ENCODE measurements at regions of chr3 and their contacts with region 1.

Region 1: DNA sequence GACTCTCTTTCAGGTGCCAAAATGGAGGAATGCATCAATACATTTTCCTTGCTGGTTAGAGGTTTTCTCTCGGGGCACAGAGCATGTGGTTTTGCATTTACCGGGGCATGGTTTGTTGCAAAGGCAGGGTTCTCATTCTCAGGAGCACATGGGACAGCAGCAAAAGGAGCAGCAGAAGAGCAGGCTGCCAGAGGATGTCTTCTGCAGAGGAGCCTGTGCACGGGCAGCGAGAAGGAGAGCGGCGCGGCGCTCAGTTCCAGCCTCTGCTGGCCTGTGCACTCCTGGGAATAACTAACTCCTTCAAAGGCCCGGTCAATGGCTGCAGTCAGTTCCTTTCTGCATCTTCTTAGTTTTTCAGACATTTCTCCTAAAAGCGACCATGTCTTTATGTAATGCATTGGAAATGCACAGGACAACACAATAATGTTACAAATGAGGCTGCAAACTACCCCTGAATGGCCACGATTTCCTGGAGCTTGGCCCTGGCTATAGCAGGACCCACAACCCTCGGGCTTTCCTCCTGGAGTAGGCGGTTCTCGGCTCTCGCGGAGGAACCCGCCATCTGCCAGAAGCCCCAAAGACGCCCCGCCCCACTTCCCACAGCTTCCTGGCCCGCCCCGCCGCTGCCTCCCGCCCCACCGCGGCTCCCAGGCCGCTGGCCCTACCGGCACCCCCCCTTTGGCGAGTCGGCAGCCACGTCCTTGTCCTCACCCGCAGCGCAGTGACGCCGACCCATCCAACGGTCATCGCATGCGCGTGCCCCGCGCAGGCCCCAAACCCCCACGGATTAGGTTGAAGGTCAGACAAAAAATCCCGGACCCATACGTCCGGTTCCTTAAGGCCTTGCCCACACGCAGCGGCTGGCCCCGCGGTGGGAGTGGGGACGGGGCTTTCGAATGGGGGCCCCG is at the start of gene C3orf62:
- DNase-seq: peak; percentile 96
- ATAC-seq: peak; percentile 96
- total RNA-seq, gene C3orf62: 3.0 TPM

Region 2: GRCh38 chr3:49171119-49171774 is 105.5 kb before region 1 on chr3 and contains the start of gene KLHDC8B:
- intact Hi-C with region 1: loop called (anchors 10 kb)
- DNase-seq: peak; percentile 95
- ATAC-seq: peak; percentile 88
- total RNA-seq, gene KLHDC8B: 95.1 TPM

Region 3: GRCh38 chr3:49217688-49218470 is 58.9 kb before region 1 on chr3:
- intact Hi-C with region 1: no loop called
- DNase-seq: peak; percentile 70
- ATAC-seq: peak; percentile 86

Region 4: DNA sequence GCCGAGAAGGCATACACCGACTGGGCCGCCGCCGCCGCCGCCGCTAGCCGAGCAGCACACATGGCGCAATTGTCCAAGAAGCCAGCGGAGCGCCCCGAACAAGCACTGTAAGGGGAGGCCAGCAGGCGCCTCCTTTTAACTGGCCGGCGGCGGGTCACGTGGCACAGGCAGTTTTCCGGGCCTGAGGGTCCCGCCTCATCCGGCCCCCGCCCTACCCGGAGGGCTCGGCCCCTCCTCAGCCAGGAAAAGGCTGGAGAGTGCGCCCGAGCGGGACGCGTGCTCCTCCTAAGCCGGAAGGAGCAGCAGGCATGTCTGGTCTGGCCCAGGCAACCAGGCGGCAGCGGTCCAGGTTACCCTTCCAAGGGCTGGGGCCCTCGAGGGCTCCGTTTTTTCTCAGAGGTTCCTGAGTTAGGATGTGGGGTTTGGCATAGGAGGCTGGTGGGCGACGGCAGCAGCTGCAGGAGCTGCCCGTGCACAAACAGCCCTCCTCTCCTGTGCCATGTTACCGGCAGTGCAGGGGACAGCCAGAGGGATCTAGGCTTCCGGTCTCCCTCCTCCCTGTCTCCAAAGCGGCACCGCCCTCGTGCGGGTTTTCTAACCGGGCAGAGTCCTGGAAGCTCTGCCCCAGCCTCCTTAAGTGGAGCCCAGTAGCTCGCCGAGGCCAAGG is 81.6 kb after region 1 on chr3 and contains the start of gene GPX1:
- intact Hi-C with region 1: no loop called
- DNase-seq: peak; percentile 97
- ATAC-seq: peak; percentile 95
- total RNA-seq, gene GPX1: 113 TPM

Region 5: GRCh38 chr3:49411968-49412631 is 135.4 kb after region 1 on chr3 and contains the starts of genes RHOA and TCTA:
- intact Hi-C with region 1: no loop called
- DNase-seq: peak; percentile 100
- ATAC-seq: peak; percentile 95
- total RNA-seq, gene RHOA: 266 TPM
- total RNA-seq, gene TCTA: 14.9 TPM

Measured in left ventricle myocardium superior (tissue), 1 donor.